AG04450 (cell line): ENCODE measurements at regions of chr13 and their contacts with region 1.

Region 1: DNA sequence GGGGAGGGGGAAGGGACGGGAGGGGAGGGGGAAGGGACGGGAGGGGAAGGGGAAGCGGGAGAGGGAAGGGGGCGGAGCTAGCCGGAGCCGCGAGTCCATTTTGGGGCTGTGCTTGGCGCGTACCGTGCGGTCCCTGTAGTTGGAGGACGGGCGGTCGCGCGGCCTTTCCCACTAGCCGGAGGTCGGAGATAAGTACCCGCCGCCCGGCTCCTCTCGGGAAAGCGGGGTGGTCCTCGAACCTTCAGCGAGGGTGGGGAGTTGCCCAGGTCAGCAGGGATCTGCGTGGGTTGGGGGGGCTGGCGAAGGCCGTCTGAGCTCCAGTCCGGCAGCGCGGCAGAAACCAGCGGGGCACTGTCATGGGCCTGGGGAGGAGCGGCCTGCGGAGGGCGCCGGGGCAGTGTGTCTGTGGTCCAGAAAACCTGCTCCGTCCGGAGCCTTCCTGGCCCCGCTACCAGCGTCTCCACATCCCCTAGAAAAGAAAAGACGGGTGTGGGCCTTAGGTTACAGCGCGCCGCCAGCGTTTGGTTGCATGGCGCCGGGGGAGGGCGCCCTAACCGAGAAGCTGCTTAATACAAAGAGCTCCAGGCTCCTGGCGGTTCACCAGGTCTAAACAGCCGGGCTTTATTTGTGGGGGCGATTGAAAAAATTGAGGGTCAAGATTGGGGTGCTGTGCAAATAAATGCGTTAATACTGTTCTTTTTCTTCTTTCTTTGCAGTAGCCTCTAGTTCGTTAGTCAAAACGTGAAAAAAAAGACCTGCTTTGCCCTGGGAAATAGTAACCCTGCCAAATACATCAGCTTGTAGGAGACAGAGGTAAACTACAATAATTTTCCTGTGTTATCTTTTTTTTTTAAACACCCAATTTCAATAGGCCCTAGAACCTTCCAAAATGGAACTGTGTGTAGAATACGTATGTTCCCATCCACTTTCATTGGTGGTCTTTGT is at the start of gene TRIM13:
- DNase-seq: peak; percentile 65
- H3K4me3 ChIP-seq: peak within 1 kb of the TSS; percentile 83
- H3K27ac ChIP-seq: peak within 1 kb of the TSS; percentile 96
- H3K27me3 ChIP-seq: no peaks in the 10 kb centered on the region
- CTCF ChIP-seq: peak; percentile 87
- polyA plus RNA-seq, gene TRIM13: 25.4 and 33.3 TPM in 2 replicates

Region 2: DNA sequence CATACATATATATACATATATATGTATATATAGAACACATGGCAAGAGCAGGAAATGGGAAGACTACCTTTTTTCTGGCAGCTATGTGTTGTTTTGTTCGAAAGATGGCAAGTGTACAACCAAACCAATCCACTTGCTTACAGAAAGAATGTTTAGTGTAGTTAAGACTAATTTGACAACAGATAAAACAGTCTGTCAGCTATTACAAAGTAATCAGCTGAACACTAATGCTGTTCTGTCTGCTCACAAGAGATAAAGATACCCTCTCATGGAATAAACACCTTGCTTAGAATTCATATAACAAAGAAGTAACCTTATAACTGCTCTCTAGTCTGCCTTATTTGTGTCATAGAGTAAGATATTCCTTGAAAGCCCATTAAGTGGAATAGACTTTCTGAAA is 17.2 kb after region 1 on chr13:
- CTCF ChIA-PET with region 1: interaction called, 17 read pairs
- POLR2A ChIA-PET with region 1: interaction called, 12 read pairs
- DNase-seq: no peak
- H3K4me3 ChIP-seq: no peak overlapping the region
- H3K27ac ChIP-seq: no peak overlapping the region
- H3K27me3 ChIP-seq: no peaks in the 10 kb centered on the region
- CTCF ChIP-seq: no peak

Region 3: DNA sequence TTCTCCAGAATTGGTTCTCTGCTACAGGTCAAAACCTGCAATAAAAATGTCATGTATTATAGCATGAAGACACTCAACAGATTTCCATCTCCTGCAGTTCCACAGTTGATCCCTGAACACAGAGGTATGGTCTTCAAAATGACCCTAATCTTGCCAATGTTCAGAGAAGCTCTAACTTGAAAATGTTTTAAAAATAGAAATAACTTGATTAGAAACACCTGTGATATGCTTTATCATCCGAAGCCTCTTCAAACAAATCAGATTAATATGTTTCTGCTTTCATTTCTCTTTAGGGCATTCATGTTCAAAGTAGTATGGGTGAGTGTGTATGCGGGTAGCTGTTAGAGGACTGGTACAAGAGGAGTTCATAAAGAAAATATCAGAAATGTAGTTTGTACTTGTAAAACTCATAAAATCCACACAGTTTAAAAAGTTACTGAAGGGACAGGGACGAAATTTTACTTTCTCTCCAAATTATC is 78.4 kb after region 1 on chr13:
- CTCF ChIA-PET with region 1: interaction called, 36 read pairs
- POLR2A ChIA-PET with region 1: interaction called, 24 read pairs
- DNase-seq: no peak
- H3K4me3 ChIP-seq: no peak overlapping the region
- H3K27ac ChIP-seq: no peak overlapping the region
- H3K27me3 ChIP-seq: no peaks in the 10 kb centered on the region
- CTCF ChIP-seq: no peak

Region 4: GRCh38 chr13:50236898-50237318 is 239.7 kb after region 1 on chr13:
- CTCF ChIA-PET with region 1: no interaction called
- POLR2A ChIA-PET with region 1: no interaction called
- DNase-seq: no peak
- H3K4me3 ChIP-seq: no peak overlapping the region
- H3K27ac ChIP-seq: no peak overlapping the region
- H3K27me3 ChIP-seq: peaks cover 15% of the 10 kb centered on the region
- CTCF ChIP-seq: no peak

Region 5: GRCh38 chr13:50801087-50801931 is 804.1 kb after region 1 on chr13:
- CTCF ChIA-PET with region 1: interaction called, 11 read pairs
- POLR2A ChIA-PET with region 1: no interaction called
- DNase-seq: peak; percentile 37
- H3K4me3 ChIP-seq: no peak overlapping the region
- H3K27ac ChIP-seq: no peak overlapping the region
- H3K27me3 ChIP-seq: no peaks in the 10 kb centered on the region
- CTCF ChIP-seq: peak; percentile 85